Transverse colon (tissue), 4 donors: ENCODE measurements at regions of chr1 and their contacts with region 1.

Region 1: GRCh38 chr1:85313888-85314696 is 37.7 kb upstream of the BCL10 start:
- DNase-seq: no peak
- H3K4me3 ChIP-seq: no peak overlapping the region
- H3K27ac ChIP-seq: peak overlapping the region in 3 of 4 donors; percentile 39 to 63 (median 51)
- H3K4me1 ChIP-seq: peaks cover 0 to 12% (median 6%) of the 10 kb centered on the region in 4 donors
- H3K27me3 ChIP-seq: no peaks in the 10 kb centered on the region
- CTCF ChIP-seq: no peak
- EP300 ChIP-seq: no peak
- POLR2A ChIP-seq: no peak

Region 2: GRCh38 chr1:85502625-85503083 is 188.6 kb after region 1 on chr1:
- in situ Hi-C with region 1: loop called in 3 of 4 experiments (anchors 10 to 25 kb)
- intact Hi-C with region 1: no loop called
- DNase-seq: peak; percentile 53
- H3K4me3 ChIP-seq: no peak overlapping the region
- H3K27ac ChIP-seq: peak overlapping the region in 1 of 4 donors; percentile 15
- H3K4me1 ChIP-seq: peaks cover 0 to 12% (median 3%) of the 10 kb centered on the region in 4 donors
- H3K27me3 ChIP-seq: no peaks in the 10 kb centered on the region
- CTCF ChIP-seq: peak; percentile 57 to 67 (median 61)
- EP300 ChIP-seq: no peak
- POLR2A ChIP-seq: no peak

Region 3: DNA sequence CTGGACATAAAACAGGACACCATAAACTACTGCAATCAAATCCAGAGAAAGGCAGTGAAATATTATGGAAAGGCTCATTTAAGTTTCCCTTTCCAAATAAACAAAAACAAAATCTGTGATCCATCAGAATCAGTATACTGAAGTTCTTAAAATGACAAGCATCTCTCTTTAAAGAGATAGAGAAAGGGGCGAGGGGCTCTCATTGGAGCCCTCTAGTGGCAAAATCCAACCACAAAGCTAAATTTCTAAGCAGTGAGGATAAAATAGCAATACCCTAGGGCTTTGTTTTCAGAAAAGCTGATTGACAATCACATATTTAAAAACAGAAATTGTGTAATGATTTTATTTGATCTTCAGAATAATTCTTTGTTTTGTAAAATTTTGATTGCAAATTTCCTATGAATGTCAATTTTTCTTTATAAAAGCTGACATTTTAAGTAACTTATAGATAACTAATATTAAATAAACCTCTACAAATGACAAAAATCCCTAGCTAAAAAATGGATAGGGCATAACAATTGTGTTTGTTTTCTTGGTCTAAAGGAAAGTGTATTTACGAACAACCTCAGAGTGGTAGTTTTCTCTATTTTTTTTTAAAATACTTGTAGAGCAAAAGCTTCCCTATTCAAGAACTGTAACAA is 704.3 kb after region 1 on chr1:
- in situ Hi-C with region 1: loop called in 2 of 4 experiments (anchors 10 to 25 kb)
- intact Hi-C with region 1: no loop called
- DNase-seq: no peak
- H3K4me3 ChIP-seq: no peak overlapping the region
- H3K27ac ChIP-seq: no peak overlapping the region
- H3K4me1 ChIP-seq: no peaks in the 10 kb centered on the region
- H3K27me3 ChIP-seq: no peaks in the 10 kb centered on the region
- CTCF ChIP-seq: peak; percentile 36 to 62 (median 52)
- EP300 ChIP-seq: no peak
- POLR2A ChIP-seq: no peak